ENCODE measurements at regions of chr6 and their contacts with region 1.

Region 1: DNA sequence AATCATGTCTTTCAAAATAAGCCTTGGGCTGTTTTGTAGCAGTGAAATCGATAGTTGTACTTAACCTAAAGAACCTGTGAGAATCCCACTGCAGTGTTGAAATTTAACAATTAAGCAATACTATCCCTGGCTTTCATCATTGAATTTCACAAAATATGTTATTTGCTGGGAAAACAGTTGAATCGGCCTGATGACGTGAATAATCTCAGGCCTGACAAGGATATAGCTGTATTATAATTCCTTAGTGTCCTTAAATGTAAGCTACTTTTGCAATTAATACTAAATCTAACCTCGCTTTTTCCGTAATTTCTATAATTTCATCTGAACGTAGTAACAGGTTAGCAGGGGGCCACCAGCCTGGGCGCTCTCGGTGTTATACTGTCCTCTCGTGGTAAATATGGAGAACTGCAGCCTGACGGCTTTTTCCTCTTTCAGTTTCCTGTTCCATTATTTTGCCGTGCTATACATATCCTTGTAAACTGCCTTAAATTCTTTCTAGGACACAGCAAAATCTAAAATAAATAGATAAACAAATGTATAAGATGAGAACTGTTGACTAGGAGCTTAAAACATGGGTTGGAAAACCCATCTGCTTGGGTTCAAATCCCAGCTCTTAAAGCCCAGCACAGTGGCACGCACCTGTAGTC is 24.0 kb downstream of the MTFR2 start:
- DNase-seq: peak; percentile 4 to 76 (median 41)
- ATAC-seq: peak; percentile 82 to 88 (median 84)
- H3K4me3 ChIP-seq: no peak overlapping the region
- H3K4me3 Mint-ChIP-seq: peak overlapping the region; percentile 48 to 54 (median 53)
- H3K27ac ChIP-seq: no peak overlapping the region
- H3K27ac Mint-ChIP-seq: no peak overlapping the region
- H3K4me1 ChIP-seq: no peaks in the 10 kb centered on the region
- H3K4me1 Mint-ChIP-seq: peaks cover 0 to 6% (median 3%) of the 10 kb centered on the region in 3 donors
- H3K27me3 ChIP-seq: no peaks in the 10 kb centered on the region
- H3K27me3 Mint-ChIP-seq: no peaks in the 10 kb centered on the region

Region 2: DNA sequence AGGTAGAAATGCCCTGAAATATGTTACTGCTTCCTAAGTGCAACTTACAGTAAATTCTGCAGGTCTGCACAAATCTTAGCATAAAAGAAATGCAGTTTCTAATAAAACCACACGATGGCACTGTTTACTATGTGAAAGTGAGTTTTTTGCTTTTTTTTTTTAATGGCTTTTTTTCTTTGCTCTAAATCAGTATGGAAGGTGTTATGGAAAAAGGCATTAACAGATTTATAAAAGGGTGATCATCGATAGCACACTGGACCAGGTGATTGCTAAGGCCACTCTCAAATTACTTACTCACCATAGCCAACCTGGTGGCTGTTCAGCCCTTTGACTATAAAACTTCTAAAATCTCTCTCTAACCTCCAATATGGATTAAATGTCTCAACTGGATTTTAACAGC is 774.5 kb before region 1 on chr6:
- CTCF ChIA-PET with region 1: interaction called, 12 to 14 read pairs
- POLR2A ChIA-PET with region 1: interaction called in 1 of 2 experiments, 3 read pairs
- DNase-seq: peak in 1 of 35 experiments; percentile 67
- ATAC-seq: peak in 1 of 4 experiments; percentile 43
- H3K4me3 ChIP-seq: no peak overlapping the region
- H3K4me3 Mint-ChIP-seq: no peak overlapping the region
- H3K27ac ChIP-seq: no peak overlapping the region
- H3K27ac Mint-ChIP-seq: no peak overlapping the region
- H3K4me1 ChIP-seq: no peaks in the 10 kb centered on the region
- H3K4me1 Mint-ChIP-seq: no peaks in the 10 kb centered on the region
- H3K27me3 ChIP-seq: no peaks in the 10 kb centered on the region
- H3K27me3 Mint-ChIP-seq: no peaks in the 10 kb centered on the region

Region 3: GRCh38 chr6:135535989-135536414 is 690.1 kb before region 1 on chr6:
- CTCF ChIA-PET with region 1: interaction called, 23 to 28 read pairs
- POLR2A ChIA-PET with region 1: no interaction called
- DNase-seq: peak in 6 of 35 experiments; percentile 2 to 61 (median 8)
- ATAC-seq: peak; percentile 62 to 69 (median 64)
- H3K4me3 ChIP-seq: no peak overlapping the region
- H3K4me3 Mint-ChIP-seq: peak overlapping the region in 2 of 3 donors; percentile 46 to 50
- H3K27ac ChIP-seq: no peak overlapping the region
- H3K27ac Mint-ChIP-seq: peak overlapping the region in 1 of 2 donors; percentile 36
- H3K4me1 ChIP-seq: peaks cover 4 to 8% of the 10 kb centered on the region in 2 experiments
- H3K4me1 Mint-ChIP-seq: peaks cover 0 to 18% (median 13%) of the 10 kb centered on the region in 3 donors
- H3K27me3 ChIP-seq: no peaks in the 10 kb centered on the region
- H3K27me3 Mint-ChIP-seq: peaks cover 0 to 3% of the 10 kb centered on the region in 2 donors

Region 4: GRCh38 chr6:135909737-135910387 is 316.3 kb before region 1 on chr6:
- CTCF ChIA-PET with region 1: interaction called, 6 to 18 read pairs
- POLR2A ChIA-PET with region 1: no interaction called
- DNase-seq: peak; percentile 17 to 86 (median 53)
- ATAC-seq: peak; percentile 65 to 92 (median 81)
- H3K4me3 ChIP-seq: peak overlapping the region in 1 of 2 donors; percentile 32
- H3K4me3 Mint-ChIP-seq: no peak overlapping the region
- H3K27ac ChIP-seq: no peak overlapping the region
- H3K27ac Mint-ChIP-seq: no peak overlapping the region
- H3K4me1 ChIP-seq: peaks cover 3% of the 10 kb centered on the region in 2 experiments
- H3K4me1 Mint-ChIP-seq: peaks cover 0 to 4% (median 2%) of the 10 kb centered on the region in 3 donors
- H3K27me3 ChIP-seq: no peaks in the 10 kb centered on the region
- H3K27me3 Mint-ChIP-seq: no peaks in the 10 kb centered on the region

Region 5: DNA sequence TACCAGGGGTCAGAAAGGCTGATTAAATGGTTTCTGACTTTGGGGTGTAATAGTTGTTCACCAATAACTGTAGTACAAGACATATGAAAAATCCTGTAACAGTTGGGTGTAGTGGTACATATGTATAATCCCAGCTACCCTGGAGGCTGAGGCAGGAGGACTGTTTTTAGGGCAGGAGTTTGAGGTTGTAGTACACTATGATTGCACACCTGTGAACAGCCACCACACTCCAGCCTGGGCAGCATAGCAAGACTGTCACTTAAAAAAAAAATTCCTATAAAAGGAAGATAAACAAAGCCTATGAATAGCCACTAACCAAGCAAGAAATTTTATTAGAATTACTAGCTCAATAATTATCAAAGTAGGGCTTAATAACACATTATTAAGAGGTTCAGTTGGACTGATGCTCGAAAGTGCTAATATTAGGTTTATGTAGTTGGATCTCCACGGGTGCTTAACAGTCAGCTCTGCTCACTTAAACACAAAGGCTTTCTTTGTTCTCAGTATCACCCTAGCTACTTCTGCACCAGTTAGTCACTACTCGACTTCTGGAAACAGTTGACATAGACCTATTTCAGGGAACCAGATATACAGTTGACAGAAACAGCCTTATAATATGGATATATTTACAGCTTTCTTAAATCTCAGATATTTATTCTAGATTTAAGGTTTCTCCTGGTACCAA is 89.0 kb before region 1 on chr6:
- CTCF ChIA-PET with region 1: no interaction called
- POLR2A ChIA-PET with region 1: no interaction called
- DNase-seq: no peak
- ATAC-seq: no peak
- H3K4me3 ChIP-seq: no peak overlapping the region
- H3K4me3 Mint-ChIP-seq: no peak overlapping the region
- H3K27ac ChIP-seq: no peak overlapping the region
- H3K27ac Mint-ChIP-seq: no peak overlapping the region
- H3K4me1 ChIP-seq: no peaks in the 10 kb centered on the region
- H3K4me1 Mint-ChIP-seq: no peaks in the 10 kb centered on the region
- H3K27me3 ChIP-seq: no peaks in the 10 kb centered on the region
- H3K27me3 Mint-ChIP-seq: no peaks in the 10 kb centered on the region

Region 6: GRCh38 chr6:136249811-136250685 is 23.9 kb after region 1 on chr6 and contains the start of gene MTFR2:
- CTCF ChIA-PET with region 1: interaction called, 7 to 10 read pairs
- POLR2A ChIA-PET with region 1: no interaction called
- DNase-seq: peak; percentile 79 to 98 (median 92)
- ATAC-seq: peak; percentile 88 to 97 (median 95)
- H3K4me3 ChIP-seq: peak within 1 kb of the TSS; percentile 64 to 97
- H3K4me3 Mint-ChIP-seq: peak within 1 kb of the TSS; percentile 92 to 97 (median 95)
- H3K27ac ChIP-seq: no peak within 1 kb of the TSS
- H3K27ac Mint-ChIP-seq: peak within 1 kb of the TSS; percentile 34 to 86
- H3K4me1 ChIP-seq: peaks cover 10 to 11% of the 10 kb centered on the region in 2 experiments
- H3K4me1 Mint-ChIP-seq: peaks cover 39 to 47% (median 40%) of the 10 kb centered on the region in 3 donors
- H3K27me3 ChIP-seq: no peaks in the 10 kb centered on the region
- H3K27me3 Mint-ChIP-seq: no peaks in the 10 kb centered on the region
- total RNA-seq, gene MTFR2: 1.2 to 1.8 (median 1.3) TPM

Measured in T-cell (primary cell).